ENCODE measurements at regions of chr9 and their contacts with region 1.

Region 1: GRCh38 chr9:98192503-98193335 is at the start of gene CORO2A:
- DNase-seq: peak; percentile 89
- H3K4me3 ChIP-seq: peak within 1 kb of the TSS; percentile 59 to 67 (median 63)
- H3K27ac ChIP-seq: peak within 1 kb of the TSS; percentile 79 to 91 (median 87)
- H3K4me1 ChIP-seq: peaks cover 4 to 39% (median 15%) of the 10 kb centered on the region in 4 donors
- H3K27me3 ChIP-seq: no peaks in the 10 kb centered on the region
- CTCF ChIP-seq: peak; percentile 15 to 72 (median 34)
- EP300 ChIP-seq: no peak
- POLR2A ChIP-seq: peak; percentile 72
- total RNA-seq, gene CORO2A: 10.0 to 59.1 (median 47.1) TPM

Region 2: DNA sequence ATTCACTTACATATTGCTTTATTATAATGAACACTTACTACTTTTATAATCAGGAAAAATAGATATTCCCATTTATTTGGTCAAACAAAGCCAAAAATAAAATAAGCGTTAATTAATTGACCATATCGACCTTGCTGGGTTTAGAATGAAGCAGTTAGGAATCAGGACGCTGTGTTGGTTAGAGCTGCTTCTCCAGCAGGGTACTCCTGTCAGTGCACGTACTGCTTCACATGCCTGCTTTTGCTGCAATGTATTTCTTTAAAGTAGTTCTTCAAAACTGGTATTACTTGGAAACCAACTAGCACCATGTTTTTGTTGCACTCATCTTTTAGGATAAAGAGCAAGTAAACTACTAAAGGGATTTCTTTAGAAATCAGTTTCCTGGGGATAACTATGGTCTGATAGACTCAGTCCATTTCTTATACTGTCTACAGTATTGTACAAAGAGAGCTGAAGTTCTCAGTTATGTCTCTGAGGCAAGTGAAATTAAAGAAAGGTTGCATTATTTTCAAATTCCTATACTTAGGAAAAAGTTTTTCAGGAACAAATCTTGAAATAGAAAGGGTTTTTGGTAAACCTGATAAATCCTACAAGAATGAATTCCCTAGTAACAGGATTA is 263.6 kb before region 1 on chr9:
- in situ Hi-C with region 1: no loop called
- intact Hi-C with region 1: loop called (anchors 5 kb)
- DNase-seq: no peak
- H3K4me3 ChIP-seq: no peak overlapping the region
- H3K27ac ChIP-seq: no peak overlapping the region
- H3K4me1 ChIP-seq: peaks cover 0 to under 1% (median 0%) of the 10 kb centered on the region in 4 donors
- H3K27me3 ChIP-seq: peaks cover 51% of the 10 kb centered on the region
- CTCF ChIP-seq: no peak
- EP300 ChIP-seq: no peak
- POLR2A ChIP-seq: no peak

Region 3: DNA sequence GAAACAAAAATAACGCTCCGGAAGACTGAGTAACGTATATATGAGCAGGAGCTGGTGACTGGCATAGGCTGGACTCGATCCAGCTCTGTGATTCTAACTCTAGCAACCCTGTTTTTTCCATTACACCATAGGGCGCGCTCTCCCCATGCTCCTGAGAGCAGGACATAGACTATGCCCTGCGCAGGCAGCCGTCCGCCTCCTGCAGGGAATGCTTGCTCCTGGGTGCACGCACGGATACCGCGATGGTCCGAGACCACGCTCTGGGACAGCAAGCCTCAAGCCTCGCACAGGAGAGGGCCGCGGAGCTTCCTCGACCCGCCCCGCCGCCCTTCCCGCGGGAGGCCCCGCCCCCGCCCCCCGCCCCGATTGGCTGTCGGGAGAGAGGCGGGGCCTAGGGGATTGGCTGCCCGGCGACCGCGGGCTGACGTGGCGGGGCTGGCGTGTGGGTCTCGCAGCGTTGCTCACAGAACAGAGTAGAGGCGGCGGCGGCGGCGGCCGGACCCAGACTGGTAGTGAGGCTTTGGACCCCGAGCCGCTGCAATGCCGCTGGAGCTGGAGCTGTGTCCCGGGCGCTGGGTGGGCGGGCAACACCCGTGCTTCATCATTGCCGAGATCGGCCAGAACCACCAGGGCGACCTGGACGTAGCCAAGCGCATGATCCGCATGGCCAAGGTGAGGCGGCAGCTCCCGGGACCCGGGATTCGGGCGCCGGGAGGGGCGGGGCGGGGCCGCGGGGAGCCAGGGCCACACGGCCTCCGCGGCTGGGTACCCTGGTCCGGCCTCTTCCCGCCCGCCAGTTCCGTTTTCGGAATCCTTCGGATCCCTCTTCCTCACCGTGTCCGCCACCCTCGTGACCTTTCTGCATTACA is 136.2 kb before region 1 on chr9 and contains the start of gene NANS:
- in situ Hi-C with region 1: loop called in 1 of 4 experiments (anchors 25 kb)
- intact Hi-C with region 1: no loop called
- DNase-seq: peak; percentile 97
- H3K4me3 ChIP-seq: peak within 1 kb of the TSS; percentile 67 to 88 (median 80)
- H3K27ac ChIP-seq: peak within 1 kb of the TSS; percentile 92 to 99 (median 97)
- H3K4me1 ChIP-seq: peaks cover 8 to 40% (median 25%) of the 10 kb centered on the region in 4 donors
- H3K27me3 ChIP-seq: no peaks in the 10 kb centered on the region
- CTCF ChIP-seq: peak in 2 of 5 experiments; percentile 12 to 17
- EP300 ChIP-seq: no peak
- POLR2A ChIP-seq: peak; percentile 98
- total RNA-seq, gene NANS: 86.6 to 319 (median 269) TPM

Region 4: DNA sequence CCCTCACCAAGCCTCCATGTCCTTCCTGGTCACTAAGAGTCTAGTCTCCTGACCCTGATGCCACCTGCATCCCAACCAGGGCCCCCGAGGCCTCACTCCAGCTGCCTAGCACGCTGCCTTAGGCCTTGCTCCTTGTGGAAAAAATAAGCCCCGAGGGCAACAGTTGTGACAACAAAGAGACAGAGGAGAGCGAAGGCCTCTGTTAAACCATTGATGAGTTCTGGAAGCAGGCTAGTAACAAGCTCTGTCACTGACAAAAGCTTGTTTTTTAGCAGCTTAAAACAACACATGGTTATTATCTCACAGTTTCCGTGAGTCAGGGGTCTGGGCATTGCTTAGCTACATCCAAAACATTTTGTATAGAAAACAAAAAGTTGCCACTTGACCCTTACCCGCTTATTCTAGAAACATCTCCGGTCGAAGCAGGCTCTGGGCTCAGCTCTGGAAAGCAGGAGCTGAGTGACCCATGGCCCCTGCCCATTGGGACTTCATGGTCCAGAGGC is 111.0 kb after region 1 on chr9:
- in situ Hi-C with region 1: no loop called
- intact Hi-C with region 1: no loop called
- DNase-seq: no peak
- H3K4me3 ChIP-seq: no peak overlapping the region
- H3K27ac ChIP-seq: no peak overlapping the region
- H3K4me1 ChIP-seq: no peaks in the 10 kb centered on the region
- H3K27me3 ChIP-seq: no peaks in the 10 kb centered on the region
- CTCF ChIP-seq: no peak
- EP300 ChIP-seq: no peak
- POLR2A ChIP-seq: no peak

Measured in transverse colon (tissue), 4 donors.